CD4-positive, alpha-beta T cell (primary cell): ENCODE measurements at regions of chr1 and their contacts with region 1.

Region 1: DNA sequence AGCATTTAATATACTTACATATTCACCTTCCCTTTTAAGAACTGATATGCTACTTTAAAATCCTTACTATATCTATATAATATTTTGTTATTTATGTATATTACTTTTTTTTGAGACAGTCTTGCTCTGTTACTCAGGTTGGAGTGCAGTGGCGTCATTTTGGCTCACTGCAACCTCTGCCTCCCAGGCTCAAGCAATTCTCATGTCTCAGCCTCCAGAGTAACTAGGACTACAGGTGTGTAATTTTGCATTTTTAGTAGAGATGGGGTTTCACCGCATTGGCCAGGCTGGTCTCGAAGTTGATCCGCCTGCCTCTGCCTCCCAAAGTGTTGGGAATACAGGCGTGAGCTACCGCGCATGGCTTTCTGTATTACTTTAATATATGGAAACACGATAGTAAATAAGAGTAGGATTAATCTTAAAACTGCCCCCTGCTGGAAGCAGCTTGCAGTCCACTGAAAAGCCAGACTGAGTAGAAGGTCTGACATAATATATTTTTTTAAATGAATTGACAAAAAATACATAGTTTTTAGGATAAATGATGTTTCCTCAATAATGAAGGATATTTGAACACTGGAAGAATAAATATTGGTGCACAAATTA is 24.4 kb downstream of the RCAN3 start:
- DNase-seq: peak in 13 of 14 experiments; percentile 22 to 75 (median 42)
- ATAC-seq: peak; percentile 78
- H3K4me3 ChIP-seq: no peak overlapping the region
- H3K4me3 Mint-ChIP-seq: peak overlapping the region; percentile 45
- H3K27ac ChIP-seq: no peak overlapping the region
- H3K27ac Mint-ChIP-seq: peak overlapping the region; percentile 64
- H3K4me1 ChIP-seq: peaks cover 49% of the 10 kb centered on the region
- H3K4me1 Mint-ChIP-seq: peaks cover 76% of the 10 kb centered on the region
- H3K27me3 ChIP-seq: no peaks in the 10 kb centered on the region
- H3K27me3 Mint-ChIP-seq: no peaks in the 10 kb centered on the region
- CTCF ChIP-seq: peak; percentile 78

Region 2: GRCh38 chr1:24514946-24515345 is 12.1 kb before region 1 on chr1:
- CTCF ChIA-PET with region 1: interaction called, 10 read pairs
- POLR2A ChIA-PET with region 1: interaction called, 15 read pairs
- intact Hi-C with region 1: no loop called
- DNase-seq: no peak
- ATAC-seq: no peak
- H3K4me3 ChIP-seq: no peak overlapping the region
- H3K4me3 Mint-ChIP-seq: no peak overlapping the region
- H3K27ac ChIP-seq: no peak overlapping the region
- H3K27ac Mint-ChIP-seq: peak overlapping the region; percentile 96
- H3K4me1 ChIP-seq: peaks cover 76% of the 10 kb centered on the region
- H3K4me1 Mint-ChIP-seq: peaks cover 81% of the 10 kb centered on the region
- H3K27me3 ChIP-seq: no peaks in the 10 kb centered on the region
- H3K27me3 Mint-ChIP-seq: no peaks in the 10 kb centered on the region
- CTCF ChIP-seq: no peak

Region 3: DNA sequence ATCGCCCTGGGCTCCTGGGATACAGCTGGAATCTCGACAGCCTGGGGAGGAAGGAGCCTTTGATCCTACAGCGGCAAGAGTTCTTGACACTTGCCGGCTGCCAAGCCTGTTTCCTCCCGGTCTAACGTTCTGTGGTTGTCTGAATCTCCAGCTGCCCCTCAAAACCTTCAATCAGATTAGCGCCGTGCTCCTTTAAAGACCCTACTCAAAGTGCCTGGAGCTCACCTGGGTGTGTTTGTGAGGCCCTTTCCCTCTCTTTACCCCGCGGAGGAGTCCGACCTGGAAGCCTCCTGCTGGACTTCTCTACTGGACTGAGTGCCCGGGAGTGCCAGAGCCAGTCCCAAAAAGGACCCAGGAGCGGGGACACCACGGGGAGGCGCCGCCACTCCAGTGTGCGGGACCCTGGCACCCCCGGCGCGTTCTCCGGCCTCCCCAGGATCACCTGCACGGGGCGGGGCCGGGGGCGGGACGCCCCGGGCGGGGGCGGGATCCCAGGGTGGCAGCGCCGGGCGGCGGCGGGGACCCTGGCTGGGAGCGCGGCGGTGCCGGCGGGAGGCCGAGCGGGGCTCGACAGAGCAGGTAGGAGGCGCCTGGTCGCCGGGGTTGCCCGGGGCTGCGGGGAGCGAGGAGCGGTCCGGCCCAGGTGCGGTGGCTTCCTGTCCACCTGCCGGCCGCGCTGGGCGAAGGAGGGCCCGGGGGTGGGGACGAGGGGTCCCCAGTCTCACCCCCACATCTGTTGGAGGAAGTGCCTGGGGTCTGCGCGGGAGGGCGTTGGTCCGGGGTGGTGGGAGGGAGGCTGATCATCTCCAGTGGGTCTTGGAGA is 28.8 kb after region 1 on chr1 and contains the start of gene NCMAP:
- CTCF ChIA-PET with region 1: no interaction called
- POLR2A ChIA-PET with region 1: no interaction called
- intact Hi-C with region 1: no loop called
- DNase-seq: peak; percentile 20 to 78 (median 54)
- ATAC-seq: peak; percentile 93
- H3K4me3 ChIP-seq: peak within 1 kb of the TSS; percentile 52
- H3K4me3 Mint-ChIP-seq: peak within 1 kb of the TSS; percentile 86
- H3K27ac ChIP-seq: no peak within 1 kb of the TSS
- H3K27ac Mint-ChIP-seq: no peak within 1 kb of the TSS
- H3K4me1 ChIP-seq: peaks cover 18% of the 10 kb centered on the region
- H3K4me1 Mint-ChIP-seq: peaks cover 9% of the 10 kb centered on the region
- H3K27me3 ChIP-seq: peaks cover 7 to 9% of the 10 kb centered on the region in 2 experiments
- H3K27me3 Mint-ChIP-seq: peaks cover 11% of the 10 kb centered on the region
- CTCF ChIP-seq: no peak
- total RNA-seq, gene NCMAP: not detected

Region 4: DNA sequence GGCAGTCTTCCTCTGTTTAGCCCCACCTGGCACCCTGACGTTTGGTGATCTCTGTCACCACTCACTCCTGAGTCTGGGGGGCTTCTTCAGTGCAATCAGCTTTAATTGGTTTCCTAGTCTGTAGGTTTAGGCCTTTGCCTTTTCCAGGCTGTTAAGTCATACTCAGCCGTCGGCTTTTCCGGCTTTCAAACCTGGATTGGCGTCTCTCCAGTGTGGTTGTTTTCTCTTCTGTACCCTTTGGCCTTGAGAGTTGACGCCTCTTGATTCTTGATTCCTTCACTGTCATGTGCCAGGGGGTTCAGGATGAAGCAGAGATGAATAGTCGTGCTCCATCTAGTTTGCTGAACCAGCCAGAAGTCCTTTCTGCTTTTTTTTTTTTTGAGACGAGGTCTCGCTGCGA is 53.7 kb after region 1 on chr1:
- CTCF ChIA-PET with region 1: no interaction called
- POLR2A ChIA-PET with region 1: no interaction called
- intact Hi-C with region 1: no loop called
- DNase-seq: no peak
- ATAC-seq: no peak
- H3K4me3 ChIP-seq: no peak overlapping the region
- H3K4me3 Mint-ChIP-seq: no peak overlapping the region
- H3K27ac ChIP-seq: no peak overlapping the region
- H3K27ac Mint-ChIP-seq: no peak overlapping the region
- H3K4me1 ChIP-seq: no peaks in the 10 kb centered on the region
- H3K4me1 Mint-ChIP-seq: no peaks in the 10 kb centered on the region
- H3K27me3 ChIP-seq: no peaks in the 10 kb centered on the region
- H3K27me3 Mint-ChIP-seq: no peaks in the 10 kb centered on the region
- CTCF ChIP-seq: no peak

Region 5: GRCh38 chr1:24594154-24594553 is 67.1 kb after region 1 on chr1:
- CTCF ChIA-PET with region 1: no interaction called
- POLR2A ChIA-PET with region 1: no interaction called
- intact Hi-C with region 1: no loop called
- DNase-seq: no peak
- ATAC-seq: no peak
- H3K4me3 ChIP-seq: no peak overlapping the region
- H3K4me3 Mint-ChIP-seq: no peak overlapping the region
- H3K27ac ChIP-seq: no peak overlapping the region
- H3K27ac Mint-ChIP-seq: no peak overlapping the region
- H3K4me1 ChIP-seq: no peaks in the 10 kb centered on the region
- H3K4me1 Mint-ChIP-seq: no peaks in the 10 kb centered on the region
- H3K27me3 ChIP-seq: no peaks in the 10 kb centered on the region
- H3K27me3 Mint-ChIP-seq: peaks cover 6% of the 10 kb centered on the region
- CTCF ChIP-seq: no peak

Region 6: DNA sequence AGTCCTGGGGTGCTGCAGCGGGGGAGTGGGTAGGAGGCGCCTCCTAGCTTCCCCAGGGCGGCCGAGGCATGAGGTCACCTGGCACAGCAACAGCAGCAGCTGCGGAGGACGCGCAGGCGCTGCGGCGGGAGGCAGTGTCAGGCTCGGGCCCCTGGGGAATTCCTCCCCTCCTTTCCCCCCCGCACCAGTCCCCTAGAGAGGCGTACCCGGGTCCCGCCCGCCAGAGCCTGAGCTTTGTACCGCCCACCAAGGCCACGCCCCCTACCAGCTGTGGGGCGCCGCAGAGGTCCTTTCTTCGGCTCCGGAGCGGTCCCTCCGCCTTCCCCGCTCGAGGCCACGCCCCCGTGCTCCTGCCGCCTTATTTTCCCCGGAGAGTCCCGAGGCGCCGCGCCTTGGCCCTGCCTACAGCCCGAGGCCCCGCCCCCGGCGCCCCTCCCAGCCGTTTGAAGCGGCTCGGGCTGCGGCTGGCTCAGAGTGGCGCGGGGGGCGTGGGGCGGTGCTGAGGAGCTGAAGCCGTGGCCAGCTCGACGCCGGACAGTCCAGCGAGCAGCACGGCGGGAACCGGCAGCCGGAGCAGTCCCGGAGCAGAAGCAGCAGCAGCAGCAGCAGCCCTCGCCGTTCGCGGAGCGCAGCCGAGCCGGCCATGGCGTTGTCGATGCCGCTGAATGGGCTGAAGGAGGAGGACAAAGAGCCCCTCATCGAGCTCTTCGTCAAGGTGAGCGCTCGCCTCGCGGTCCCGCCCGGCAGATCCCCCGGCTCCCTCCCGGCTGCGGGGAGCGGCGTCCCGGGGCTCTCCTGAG is 218.1 kb after region 1 on chr1 and contains the start of gene CLIC4:
- CTCF ChIA-PET with region 1: no interaction called
- POLR2A ChIA-PET with region 1: no interaction called
- intact Hi-C with region 1: no loop called
- DNase-seq: peak; percentile 98 to 100 (median 99)
- ATAC-seq: peak; percentile 87
- H3K4me3 ChIP-seq: peak within 1 kb of the TSS; percentile 58
- H3K4me3 Mint-ChIP-seq: peak within 1 kb of the TSS; percentile 93
- H3K27ac ChIP-seq: no peak within 1 kb of the TSS
- H3K27ac Mint-ChIP-seq: peak within 1 kb of the TSS; percentile 80
- H3K4me1 ChIP-seq: peaks cover 15% of the 10 kb centered on the region
- H3K4me1 Mint-ChIP-seq: peaks cover 18% of the 10 kb centered on the region
- H3K27me3 ChIP-seq: peaks cover 0 to 3% of the 10 kb centered on the region in 2 experiments
- H3K27me3 Mint-ChIP-seq: no peaks in the 10 kb centered on the region
- CTCF ChIP-seq: no peak
- total RNA-seq, gene CLIC4: 1.1 to 1.3 TPM